H1 (cell line): ENCODE measurements at regions of chr11 and their contacts with region 1.

Region 1: GRCh38 chr11:131511794-131512193 is 141.4 kb downstream of the NTM start:
- DNase-seq: peak; percentile 25 to 82
- H3K4me3 ChIP-seq: no peak overlapping the region
- H3K27ac ChIP-seq: no peak overlapping the region
- H3K4me1 ChIP-seq: no peaks in the 10 kb centered on the region; a peak in 1 of 7 replicates
- H3K27me3 ChIP-seq: no peaks in the 10 kb centered on the region
- CTCF ChIP-seq: peak; percentile 65 to 84 (median 82)
- EP300 ChIP-seq: no peak
- POLR2A ChIP-seq: no peak
- RAD21 ChIP-seq: peak; percentile 81 to 87

Region 2: DNA sequence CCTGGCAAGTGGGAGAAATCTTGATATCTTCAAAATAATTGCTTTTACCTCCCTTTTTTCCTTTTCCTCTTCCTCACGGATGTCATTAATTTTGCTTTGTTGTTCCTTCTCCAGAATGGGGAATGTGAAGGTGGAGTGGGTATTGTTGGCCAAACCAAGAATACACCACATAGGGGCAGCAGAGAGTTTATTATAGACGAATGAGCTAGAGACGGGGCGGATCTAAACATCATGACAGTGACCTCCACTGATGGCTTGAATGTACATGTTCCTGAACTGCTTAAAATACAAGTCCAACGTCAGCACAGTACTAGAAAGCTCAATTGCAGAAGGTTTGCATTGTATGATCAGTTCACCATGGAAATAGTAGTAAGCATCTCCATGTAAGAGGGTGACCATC is 473.2 kb before region 1 on chr11:
- CTCF ChIA-PET with region 1: interaction called, 12 read pairs
- POLR2A ChIA-PET with region 1: no interaction called
- DNase-seq: no peak
- H3K4me3 ChIP-seq: no peak overlapping the region
- H3K27ac ChIP-seq: no peak overlapping the region
- H3K4me1 ChIP-seq: no peaks in the 10 kb centered on the region
- H3K27me3 ChIP-seq: no peaks in the 10 kb centered on the region
- CTCF ChIP-seq: peak in 2 of 3 experiments; percentile 59 to 68; a peak in 3 of 4 replicates
- EP300 ChIP-seq: no peak
- POLR2A ChIP-seq: no peak
- RAD21 ChIP-seq: peak; percentile 76 to 79

Region 3: GRCh38 chr11:131392528-131393255 is 119.1 kb before region 1 on chr11:
- CTCF ChIA-PET with region 1: interaction called, 12 read pairs
- POLR2A ChIA-PET with region 1: no interaction called
- DNase-seq: peak in 1 of 2 experiments; percentile 19
- H3K4me3 ChIP-seq: no peak overlapping the region
- H3K27ac ChIP-seq: no peak overlapping the region
- H3K4me1 ChIP-seq: peaks cover 0 to 6% (median 3%) of the 10 kb centered on the region in 4 experiments; a peak in 5 of 7 replicates
- H3K27me3 ChIP-seq: no peaks in the 10 kb centered on the region
- CTCF ChIP-seq: peak in 1 of 3 experiments; percentile 59; a peak in 2 of 4 replicates
- EP300 ChIP-seq: no peak
- POLR2A ChIP-seq: no peak
- RAD21 ChIP-seq: peak; percentile 59 to 61

Region 4: GRCh38 chr11:131495423-131495822 is 16.4 kb before region 1 on chr11:
- CTCF ChIA-PET with region 1: interaction called, 12 read pairs
- POLR2A ChIA-PET with region 1: no interaction called
- DNase-seq: no peak
- H3K4me3 ChIP-seq: no peak overlapping the region
- H3K27ac ChIP-seq: no peak overlapping the region
- H3K4me1 ChIP-seq: peaks cover 0 to 10% (median 0%) of the 10 kb centered on the region in 4 experiments; a peak in 3 of 7 replicates
- H3K27me3 ChIP-seq: no peaks in the 10 kb centered on the region
- CTCF ChIP-seq: no peak
- EP300 ChIP-seq: no peak
- POLR2A ChIP-seq: no peak
- RAD21 ChIP-seq: no peak

Region 5: DNA sequence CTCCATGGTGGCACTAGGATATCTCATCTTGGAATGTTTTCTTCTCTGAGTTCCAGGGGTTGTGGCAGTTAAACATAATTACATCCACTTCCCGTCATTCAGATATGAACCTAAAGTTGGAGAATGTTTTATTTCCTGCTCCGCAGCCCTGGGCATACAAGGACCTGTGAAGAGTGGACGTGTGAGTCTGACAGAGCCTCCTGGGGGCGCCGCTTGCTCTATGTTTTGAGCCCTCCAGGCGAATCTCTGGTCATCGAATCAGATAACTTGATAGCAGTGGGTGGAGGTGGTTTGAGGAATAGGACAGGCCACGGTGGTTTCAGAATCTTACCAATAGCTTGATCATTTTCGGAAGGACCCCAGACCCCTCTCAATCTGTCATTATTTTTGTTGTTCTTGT is 32.8 kb after region 1 on chr11:
- CTCF ChIA-PET with region 1: interaction called, 20 read pairs
- POLR2A ChIA-PET with region 1: no interaction called
- DNase-seq: peak; percentile 19 to 63
- H3K4me3 ChIP-seq: no peak overlapping the region
- H3K27ac ChIP-seq: no peak overlapping the region
- H3K4me1 ChIP-seq: peaks cover 0 to 4% (median 3%) of the 10 kb centered on the region in 4 experiments; a peak in 6 of 7 replicates
- H3K27me3 ChIP-seq: no peaks in the 10 kb centered on the region
- CTCF ChIP-seq: peak; percentile 51 to 71 (median 63)
- EP300 ChIP-seq: no peak
- POLR2A ChIP-seq: no peak
- RAD21 ChIP-seq: peak; percentile 73 to 83

Region 6: DNA sequence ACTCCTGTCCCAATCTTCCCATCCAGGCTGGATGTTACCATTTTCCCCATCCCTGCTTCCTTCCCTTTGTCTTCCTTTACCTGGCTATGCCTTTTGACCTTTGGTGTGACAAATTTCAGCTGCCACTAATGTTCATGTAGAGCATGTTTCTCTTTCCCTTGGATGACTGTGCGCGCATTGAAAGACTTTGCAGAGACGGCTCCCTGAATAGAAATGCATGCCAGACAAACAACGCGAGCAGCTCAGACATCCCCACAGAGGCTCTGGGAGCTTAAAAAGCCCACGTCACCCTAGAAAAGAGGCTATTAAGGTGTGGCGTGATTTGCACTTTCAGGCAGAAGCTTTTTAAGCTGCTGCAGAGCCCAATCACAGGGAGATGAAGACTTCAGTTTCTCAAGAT is 60.6 kb after region 1 on chr11:
- CTCF ChIA-PET with region 1: no interaction called
- POLR2A ChIA-PET with region 1: no interaction called
- DNase-seq: no peak
- H3K4me3 ChIP-seq: no peak overlapping the region
- H3K27ac ChIP-seq: no peak overlapping the region
- H3K4me1 ChIP-seq: peaks cover 0 to 4% (median 0%) of the 10 kb centered on the region in 4 experiments; a peak in 2 of 7 replicates
- H3K27me3 ChIP-seq: no peaks in the 10 kb centered on the region
- CTCF ChIP-seq: no peak
- EP300 ChIP-seq: no peak
- POLR2A ChIP-seq: no peak
- RAD21 ChIP-seq: no peak